ENCODE measurements at regions of chr6 and their contacts with region 1.

Region 1: GRCh38 chr6:42745707-42746462 is at the start of gene TBCC:
- DNase-seq: peak; percentile 97
- ATAC-seq: peak; percentile 82
- H3K4me3 Mint-ChIP-seq: peak within 1 kb of the TSS; percentile 100
- H3K27ac Mint-ChIP-seq: peak within 1 kb of the TSS; percentile 100
- H3K4me1 Mint-ChIP-seq: peaks cover 35% of the 10 kb centered on the region
- H3K27me3 Mint-ChIP-seq: peaks cover under 1% of the 10 kb centered on the region
- total RNA-seq, gene TBCC: 26.7 to 29.1 TPM

Region 2: DNA sequence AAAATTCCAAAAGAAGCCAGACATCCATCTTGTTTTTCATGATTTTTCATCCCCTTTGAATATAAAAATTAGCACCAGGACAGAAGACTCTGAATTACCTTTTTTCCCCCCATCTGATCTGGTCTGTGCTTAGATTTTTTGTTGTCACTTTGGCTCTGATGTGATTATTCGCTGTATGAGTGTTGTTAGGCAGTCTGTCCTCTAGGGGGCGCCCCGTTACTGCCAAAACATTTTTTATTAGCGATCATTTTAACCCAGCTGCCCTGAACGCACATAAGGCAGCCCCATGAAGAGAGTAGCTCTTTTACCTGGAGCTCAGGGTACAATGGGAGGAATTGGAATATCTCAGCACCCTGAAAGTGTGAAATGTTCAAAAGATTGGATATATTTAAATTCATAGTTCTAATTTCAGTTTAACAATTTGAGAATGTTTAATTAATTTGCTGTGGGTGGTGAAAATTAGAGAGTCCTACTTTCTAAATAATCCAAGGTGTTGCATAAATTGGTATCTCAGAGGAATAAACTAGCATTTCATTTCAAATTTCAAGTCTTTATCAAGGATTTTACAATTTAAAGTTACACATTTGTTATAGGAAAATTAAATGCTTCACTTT is 84.2 kb before region 1 on chr6:
- CTCF ChIA-PET with region 1: interaction called, 16 read pairs
- POLR2A ChIA-PET with region 1: interaction called, 5 read pairs
- DNase-seq: peak; percentile 90
- ATAC-seq: peak; percentile 84
- H3K4me3 Mint-ChIP-seq: no peak overlapping the region
- H3K27ac Mint-ChIP-seq: no peak overlapping the region
- H3K4me1 Mint-ChIP-seq: peaks cover 2% of the 10 kb centered on the region
- H3K27me3 Mint-ChIP-seq: no peaks in the 10 kb centered on the region

Region 3: GRCh38 chr6:42726485-42727086 is 19.3 kb before region 1 on chr6:
- CTCF ChIA-PET with region 1: interaction called, 24 read pairs
- POLR2A ChIA-PET with region 1: interaction called, 18 read pairs
- DNase-seq: peak; percentile 85
- ATAC-seq: peak; percentile 94
- H3K4me3 Mint-ChIP-seq: peak overlapping the region; percentile 71
- H3K27ac Mint-ChIP-seq: peak overlapping the region; percentile 92
- H3K4me1 Mint-ChIP-seq: peaks cover 19% of the 10 kb centered on the region
- H3K27me3 Mint-ChIP-seq: peaks cover 2% of the 10 kb centered on the region

Region 4: DNA sequence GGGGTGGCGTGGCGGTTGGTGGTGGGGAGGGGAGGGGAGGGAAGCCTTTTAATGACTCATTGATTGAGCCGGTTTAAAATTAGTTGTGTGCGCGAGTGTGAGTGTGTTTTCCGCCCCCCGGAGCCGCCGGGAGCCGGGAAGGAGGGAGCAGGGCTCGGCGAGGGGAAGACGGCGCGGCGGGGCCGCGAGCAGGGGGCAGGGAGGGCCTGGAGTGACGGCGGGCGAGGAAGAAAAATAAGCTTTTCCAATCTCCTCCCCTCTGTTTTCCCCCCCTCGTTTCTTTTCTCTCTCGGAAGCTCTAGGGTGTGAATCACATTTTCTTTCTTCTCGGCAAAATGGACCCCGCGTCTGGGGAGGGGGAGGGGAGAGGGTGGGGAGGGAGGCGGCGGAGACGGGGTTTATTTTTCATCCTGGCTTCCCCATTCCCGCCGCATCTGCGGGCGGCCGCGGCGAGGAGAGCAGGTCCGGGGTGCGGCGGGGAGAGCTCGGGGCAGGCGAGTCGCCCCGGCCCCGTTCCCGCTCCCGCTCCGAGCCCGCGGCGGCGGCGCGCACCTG is 36.8 kb after region 1 on chr6:
- CTCF ChIA-PET with region 1: interaction called, 3 read pairs
- POLR2A ChIA-PET with region 1: interaction called, 181 read pairs
- DNase-seq: peak; percentile 76
- ATAC-seq: peak; percentile 54
- H3K4me3 Mint-ChIP-seq: peak overlapping the region; percentile 95
- H3K27ac Mint-ChIP-seq: peak overlapping the region; percentile 99
- H3K4me1 Mint-ChIP-seq: peaks cover 25% of the 10 kb centered on the region
- H3K27me3 Mint-ChIP-seq: no peaks in the 10 kb centered on the region

Region 5: DNA sequence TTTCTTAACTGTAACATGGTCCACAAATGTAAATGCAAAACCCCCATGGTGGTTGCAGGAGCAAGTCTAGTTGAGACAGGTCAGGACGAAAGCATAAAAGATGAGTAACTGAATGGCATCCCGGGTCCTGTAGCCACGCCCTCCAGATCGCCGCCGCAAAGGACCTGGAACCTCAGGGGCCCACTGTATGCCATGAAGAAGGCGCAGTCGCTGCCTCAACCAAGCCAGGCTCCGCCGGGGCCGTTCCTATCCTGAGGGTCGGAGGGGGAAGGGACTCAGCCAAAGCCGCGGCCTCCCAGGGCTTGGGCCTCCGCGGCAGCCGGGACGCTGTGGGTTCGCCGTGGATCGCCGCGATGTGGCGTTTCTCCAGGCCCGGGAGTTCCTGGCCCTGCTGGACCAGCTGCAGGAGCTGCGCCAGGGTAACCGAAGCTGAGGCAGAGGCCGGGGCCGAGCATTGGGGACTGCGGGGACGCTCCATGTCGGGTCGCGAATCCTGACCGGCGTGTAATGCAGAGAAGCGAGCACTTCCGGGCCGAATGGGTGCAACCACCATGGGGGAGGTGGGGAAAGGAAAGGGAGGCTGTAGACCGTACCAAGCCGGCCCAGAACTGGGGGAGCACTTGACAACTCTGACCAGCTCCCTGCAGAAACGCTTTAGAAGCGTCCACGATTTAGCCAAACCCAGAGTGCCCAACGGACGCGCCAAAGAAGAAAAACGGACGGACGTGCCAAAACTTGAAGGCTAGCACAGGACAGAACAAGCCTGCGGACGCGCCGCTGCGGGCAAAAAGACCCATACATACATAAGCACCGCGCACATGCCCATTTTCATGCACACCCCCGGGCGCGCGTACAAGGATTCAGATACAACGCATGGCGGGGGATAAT is 144.7 kb after region 1 on chr6:
- CTCF ChIA-PET with region 1: no interaction called
- POLR2A ChIA-PET with region 1: interaction called, 19 read pairs
- DNase-seq: peak; percentile 96
- ATAC-seq: peak; percentile 93
- H3K4me3 Mint-ChIP-seq: peak overlapping the region; percentile 94
- H3K27ac Mint-ChIP-seq: peak overlapping the region; percentile 98
- H3K4me1 Mint-ChIP-seq: peaks cover 27% of the 10 kb centered on the region
- H3K27me3 Mint-ChIP-seq: no peaks in the 10 kb centered on the region

Measured in activated CD8-positive, alpha-beta T cell treated with anti-CD3 and anti-CD28 coated beads, Interleukin-2, amount 10 ng/mL, durations not matched to agents 7 days and 5 days (primary cell).